Endothelial cell of umbilical vein (primary cell): ENCODE measurements at regions of chr15 and their contacts with region 1.

Region 1: GRCh38 chr15:95226850-95227634 is 995.7 kb downstream of the MCTP2 start:
- DNase-seq: no peak
- H3K4me3 ChIP-seq: no peak overlapping the region
- H3K27ac ChIP-seq: no peak overlapping the region
- H3K4me1 ChIP-seq: no peaks in the 10 kb centered on the region
- H3K27me3 ChIP-seq: no peaks in the 10 kb centered on the region
- CTCF ChIP-seq: no peak
- POLR2A ChIP-seq: no peak

Region 2: GRCh38 chr15:95208988-95209387 is 18.1 kb before region 1 on chr15:
- CTCF ChIA-PET with region 1: no interaction called
- POLR2A ChIA-PET with region 1: no interaction called
- dilution Hi-C with region 1: no loop called
- intact Hi-C with region 1: loop called (anchors 2 kb)
- DNase-seq: peak; percentile 27
- H3K4me3 ChIP-seq: no peak overlapping the region
- H3K27ac ChIP-seq: no peak overlapping the region
- H3K4me1 ChIP-seq: peaks cover 9% of the 10 kb centered on the region
- H3K27me3 ChIP-seq: no peaks in the 10 kb centered on the region
- CTCF ChIP-seq: no peak
- POLR2A ChIP-seq: no peak